Activated CD4-positive, alpha-beta memory T cell treated with anti-CD3 and anti-CD28 coated beads for 36 hours (primary cell): ENCODE measurements at regions of chr17 and their contacts with region 1.

Region 1: DNA sequence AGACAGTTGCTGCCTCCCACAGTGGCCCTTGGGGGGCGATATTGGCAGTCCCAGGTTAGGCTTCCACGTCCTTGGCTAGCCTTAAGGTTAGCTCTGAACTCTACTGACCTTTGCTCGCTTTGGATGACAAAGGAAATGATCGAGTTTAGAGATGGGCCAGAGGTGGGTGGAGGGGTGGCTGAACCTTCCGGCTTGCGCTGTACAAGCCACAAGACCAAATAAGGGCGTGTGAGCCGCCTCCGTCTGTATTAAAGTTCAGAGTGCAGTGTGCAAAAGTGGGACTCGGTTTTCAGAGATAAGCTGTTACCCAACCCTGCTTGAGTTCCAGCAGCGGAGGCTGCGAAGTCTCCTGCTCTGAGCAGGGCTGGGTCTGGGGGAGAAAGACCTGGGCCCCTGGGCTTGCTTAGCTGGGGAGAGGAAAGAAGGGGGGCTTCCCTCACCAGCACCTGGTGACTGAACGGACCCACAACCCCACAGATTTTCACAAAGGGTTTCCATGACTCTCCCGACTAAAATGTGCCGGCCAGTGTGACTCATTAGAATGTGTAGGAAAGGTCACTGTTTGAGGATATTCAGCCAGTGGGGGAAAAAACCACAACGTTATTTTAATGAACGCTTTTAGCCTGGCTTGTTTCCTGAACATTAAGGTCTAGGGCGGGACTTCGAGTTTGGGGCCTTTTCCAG is 67.2 kb downstream of the CENPV start:
- DNase-seq: peak; percentile 90
- H3K4me3 Mint-ChIP-seq: peak overlapping the region; percentile 68
- H3K27ac Mint-ChIP-seq: peak overlapping the region; percentile 94
- H3K4me1 Mint-ChIP-seq: peaks cover 52% of the 10 kb centered on the region
- H3K27me3 Mint-ChIP-seq: no peaks in the 10 kb centered on the region

Region 2: GRCh38 chr17:16027708-16028584 is 258.2 kb before region 1 on chr17:
- CTCF ChIA-PET with region 1: no interaction called
- POLR2A ChIA-PET with region 1: no interaction called
- intact Hi-C with region 1: loop called (anchors 5 kb)
- DNase-seq: peak; percentile 81
- H3K4me3 Mint-ChIP-seq: peak overlapping the region; percentile 64
- H3K27ac Mint-ChIP-seq: peak overlapping the region; percentile 97
- H3K4me1 Mint-ChIP-seq: peaks cover 48% of the 10 kb centered on the region
- H3K27me3 Mint-ChIP-seq: no peaks in the 10 kb centered on the region

Region 3: DNA sequence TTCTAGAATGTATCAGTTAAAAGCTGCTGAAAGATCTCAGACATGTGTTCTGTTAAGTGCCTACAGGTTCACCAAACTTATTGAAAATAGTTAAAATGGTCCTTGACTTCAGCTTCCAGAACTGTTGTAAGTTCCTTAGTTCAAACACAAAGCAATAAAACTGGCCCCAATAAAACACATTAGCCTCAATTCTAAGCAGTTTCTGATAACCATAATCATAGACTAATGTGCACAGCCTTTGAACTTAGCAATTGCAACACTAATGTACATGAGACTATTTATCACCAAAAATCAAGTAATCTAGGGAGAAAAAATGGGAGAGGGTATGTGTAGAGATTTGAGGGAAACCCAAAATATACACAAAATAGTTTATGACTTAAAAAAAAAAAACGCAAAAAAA is 53.7 kb before region 1 on chr17:
- CTCF ChIA-PET with region 1: interaction called, 5 read pairs
- POLR2A ChIA-PET with region 1: no interaction called
- intact Hi-C with region 1: loop called (anchors 1 kb)
- DNase-seq: no peak
- H3K4me3 Mint-ChIP-seq: no peak overlapping the region
- H3K27ac Mint-ChIP-seq: no peak overlapping the region
- H3K4me1 Mint-ChIP-seq: peaks cover 19% of the 10 kb centered on the region
- H3K27me3 Mint-ChIP-seq: no peaks in the 10 kb centered on the region

Region 4: GRCh38 chr17:16353317-16354174 is 67.4 kb after region 1 on chr17 and contains the start of gene CENPV:
- CTCF ChIA-PET with region 1: interaction called, 3 read pairs
- POLR2A ChIA-PET with region 1: no interaction called
- intact Hi-C with region 1: loop called (anchors 1 kb)
- DNase-seq: peak; percentile 69
- H3K4me3 Mint-ChIP-seq: peak within 1 kb of the TSS; percentile 87
- H3K27ac Mint-ChIP-seq: peak within 1 kb of the TSS; percentile 28
- H3K4me1 Mint-ChIP-seq: peaks cover 22% of the 10 kb centered on the region
- H3K27me3 Mint-ChIP-seq: no peaks in the 10 kb centered on the region
- total RNA-seq, gene CENPV: 43.0 to 44.2 TPM